ENCODE measurements at regions of chr6 and their contacts with region 1.

Region 1: DNA sequence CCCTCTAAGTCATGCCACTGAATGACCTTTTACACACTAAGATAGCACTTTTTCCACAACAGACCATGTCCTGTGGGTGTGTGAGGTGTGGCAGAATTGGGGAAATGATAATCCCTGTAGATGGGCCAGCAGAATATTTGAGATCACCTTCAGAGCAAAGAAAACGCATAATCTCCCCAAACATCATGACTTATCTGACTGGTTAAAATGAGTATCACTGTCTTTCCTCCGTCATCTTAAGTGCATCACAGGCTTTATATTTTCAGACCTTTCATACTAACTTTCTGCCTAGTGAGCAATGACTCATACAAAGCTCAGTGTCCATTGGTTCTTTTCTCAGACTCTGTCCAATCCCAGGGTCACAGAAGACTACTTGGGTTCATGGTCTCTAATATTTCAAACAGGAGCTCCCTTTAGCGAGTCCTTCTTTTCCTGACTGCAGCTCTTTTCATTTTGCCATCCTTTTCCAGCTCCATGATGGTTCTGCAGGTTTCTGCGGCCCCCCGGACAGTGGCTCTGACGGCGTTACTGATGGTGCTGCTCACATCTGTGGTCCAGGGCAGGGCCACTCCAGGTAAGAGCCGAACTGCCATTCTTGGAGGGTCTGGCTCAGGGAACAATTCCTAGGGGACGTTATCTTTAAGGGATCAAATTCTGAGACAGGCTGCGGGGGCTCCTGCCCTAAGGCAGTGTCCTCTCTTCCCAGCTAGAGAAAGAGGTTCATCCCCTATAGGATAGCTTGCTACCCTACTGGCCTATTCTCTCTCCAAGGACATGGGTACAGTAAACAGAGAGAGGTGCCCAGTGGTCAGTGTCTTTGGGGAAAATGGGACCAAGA is at the start of gene HLA-DPB1:
- DNase-seq: peak; percentile 90
- H3K4me3 ChIP-seq: peak within 1 kb of the TSS; percentile 80
- H3K27ac ChIP-seq: peak within 1 kb of the TSS; percentile 88
- H3K4me1 ChIP-seq: peaks cover 41% of the 10 kb centered on the region
- CTCF ChIP-seq: no peak
- total RNA-seq, gene HLA-DPB1: 117 and 139 TPM in 2 replicates

Region 2: DNA sequence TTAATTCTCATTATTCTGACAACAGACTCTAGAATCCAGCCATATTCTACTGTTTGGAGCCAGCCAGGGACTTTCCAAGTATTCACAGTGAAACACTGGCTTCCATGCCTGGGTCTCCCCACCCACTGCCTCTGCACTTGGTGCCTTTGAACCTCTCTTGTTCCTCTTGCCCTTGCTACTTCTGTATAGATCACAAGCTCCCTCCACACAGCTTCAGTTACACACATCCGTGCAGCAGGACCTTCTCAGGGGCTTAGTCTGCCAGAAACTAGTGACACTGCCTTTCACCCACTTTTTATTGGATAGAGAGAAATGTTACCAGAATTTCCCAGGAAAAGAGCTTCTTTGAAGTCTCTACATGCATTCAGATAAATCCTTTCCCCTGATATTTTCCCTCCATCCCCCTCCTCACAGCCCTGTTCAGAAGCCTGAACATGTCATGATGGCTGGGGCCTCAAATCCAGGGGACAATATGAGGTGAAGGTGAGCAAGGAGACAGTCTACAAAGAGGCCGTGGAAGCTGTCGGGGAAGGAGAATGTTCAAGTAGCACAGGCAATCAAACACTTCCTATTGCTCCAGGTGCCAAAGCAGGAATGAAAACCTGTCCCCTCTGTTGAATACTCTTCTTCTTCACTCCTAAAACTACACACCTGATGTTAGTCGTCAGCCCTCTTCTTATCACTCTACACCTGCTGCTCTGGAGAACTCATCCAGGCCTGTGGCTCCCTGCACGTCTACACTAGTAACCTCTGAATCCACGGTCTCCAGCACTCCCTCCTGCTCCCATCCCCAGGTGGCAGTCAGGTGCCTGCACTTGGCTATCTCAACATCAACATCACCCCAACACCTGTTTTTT is 46.2 kb before region 1 on chr6:
- CTCF ChIA-PET with region 1: interaction called, 4 read pairs
- POLR2A ChIA-PET with region 1: interaction called, 75 read pairs
- intact Hi-C with region 1: loop called (anchors 2 kb)
- DNase-seq: peak; percentile 89
- H3K4me3 ChIP-seq: peak overlapping the region; percentile 52
- H3K27ac ChIP-seq: peak overlapping the region; percentile 84
- H3K4me1 ChIP-seq: peaks cover 49% of the 10 kb centered on the region
- CTCF ChIP-seq: no peak

Region 3: DNA sequence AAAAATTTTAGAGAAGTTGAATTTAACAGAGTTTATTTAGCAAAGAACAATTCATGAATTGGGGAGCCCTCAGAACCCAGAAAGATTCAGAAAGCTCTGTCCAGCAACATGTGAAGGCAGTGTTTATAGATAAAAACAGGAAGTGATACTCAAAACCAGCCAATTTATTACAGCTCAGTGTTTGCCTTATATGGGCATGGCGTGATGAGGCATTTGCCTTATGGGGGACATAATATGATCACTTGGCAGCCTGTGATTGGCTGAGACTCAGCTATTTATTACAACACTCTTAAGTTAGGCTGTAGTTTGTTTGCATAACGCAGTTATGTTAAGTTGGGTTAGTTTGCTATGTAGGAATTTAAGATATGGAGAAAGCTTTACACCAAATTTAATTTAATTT is 13.8 kb before region 1 on chr6:
- CTCF ChIA-PET with region 1: no interaction called
- POLR2A ChIA-PET with region 1: interaction called, 11 read pairs
- intact Hi-C with region 1: no loop called
- DNase-seq: peak; percentile 81
- H3K4me3 ChIP-seq: no peak overlapping the region
- H3K27ac ChIP-seq: peak overlapping the region; percentile 49
- H3K4me1 ChIP-seq: peaks cover 29% of the 10 kb centered on the region
- CTCF ChIP-seq: no peak